Common myeloid progenitor, CD34-positive (primary cell): ENCODE measurements at regions of chr6 and their contacts with region 1.

Region 1: DNA sequence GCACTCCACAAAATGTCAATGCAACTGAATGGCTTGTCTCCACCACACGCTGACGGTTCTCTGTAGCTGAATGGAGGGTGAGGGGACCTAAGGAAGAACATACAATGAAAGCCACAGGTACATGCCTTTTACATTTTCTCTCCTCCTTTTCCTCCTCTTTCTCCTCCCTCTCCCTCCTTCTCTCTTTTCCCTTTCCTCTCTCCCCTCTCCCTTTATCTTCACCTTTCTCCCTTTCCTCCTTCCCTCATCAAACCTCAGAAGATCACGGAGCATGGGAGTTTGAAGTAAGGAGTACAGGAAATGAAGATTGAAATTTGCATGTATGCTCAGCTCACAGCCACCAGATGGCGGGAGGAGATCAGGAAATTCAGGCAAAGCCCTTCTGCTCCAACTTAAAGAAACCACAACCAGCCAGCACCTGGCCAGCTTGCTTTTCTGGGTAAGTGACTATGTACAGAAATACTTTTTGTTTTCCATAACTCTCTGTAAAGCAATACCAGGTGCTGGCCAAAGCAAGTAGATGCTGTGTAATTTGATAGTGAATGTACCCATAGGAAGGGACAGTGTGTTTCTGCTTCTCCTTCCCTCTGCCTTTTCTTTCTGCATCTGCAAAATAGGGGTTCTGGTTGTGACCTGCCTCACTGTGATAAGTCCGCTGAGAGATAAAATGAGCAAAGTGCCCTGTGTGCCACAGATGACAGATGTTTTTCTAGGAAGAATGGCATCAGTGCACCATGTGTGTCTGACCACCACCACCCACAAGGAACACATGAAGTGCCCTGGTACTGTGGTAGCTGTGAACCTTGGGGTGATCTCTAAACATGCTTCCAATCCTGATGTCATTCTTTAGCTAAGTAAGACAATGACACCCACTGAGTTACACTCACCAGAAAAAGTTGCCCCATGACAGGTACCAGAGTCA is 18.6 kb upstream of the FOXO3 start:
- DNase-seq: peak; percentile 85 to 93 (median 92)
- H3K4me3 ChIP-seq: peak overlapping the region in 5 of 7 experiments; percentile 30 to 71 (median 42)
- H3K27ac ChIP-seq: no peak overlapping the region
- H3K4me1 ChIP-seq: peaks cover 3 to 31% (median 23%) of the 10 kb centered on the region in 4 experiments
- H3K27me3 ChIP-seq: no peaks in the 10 kb centered on the region

Region 2: GRCh38 chr6:108497883-108498282 is 44.2 kb before region 1 on chr6:
- CTCF ChIA-PET with region 1: no interaction called
- POLR2A ChIA-PET with region 1: no interaction called
- DNase-seq: peak; percentile 41 to 70 (median 64)
- H3K4me3 ChIP-seq: no peak overlapping the region
- H3K27ac ChIP-seq: no peak overlapping the region
- H3K4me1 ChIP-seq: peaks cover 0 to 5% (median 0%) of the 10 kb centered on the region in 4 experiments
- H3K27me3 ChIP-seq: no peaks in the 10 kb centered on the region

Region 3: DNA sequence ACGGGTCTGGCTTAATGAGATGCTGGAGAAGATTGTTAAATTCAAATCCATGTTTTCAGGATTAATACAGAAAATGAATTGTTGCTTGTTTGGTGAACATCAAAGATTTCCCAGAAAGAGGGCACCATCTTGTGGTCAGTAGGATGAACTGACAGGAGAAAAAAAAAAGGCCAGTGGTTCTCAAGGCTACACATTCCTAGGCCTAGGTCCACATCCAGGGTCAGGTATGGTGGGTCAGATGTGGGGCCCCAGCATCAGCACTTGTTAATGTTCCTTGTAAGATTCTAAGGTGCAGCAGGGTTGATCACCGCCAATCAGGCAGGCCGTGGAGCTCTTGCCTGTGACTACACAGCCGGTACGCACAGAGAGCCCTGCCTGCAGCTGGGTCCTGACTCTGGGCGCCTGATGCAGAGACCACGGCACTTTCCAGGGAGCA is 15.3 kb before region 1 on chr6:
- CTCF ChIA-PET with region 1: interaction called, 13 read pairs
- POLR2A ChIA-PET with region 1: no interaction called
- DNase-seq: peak; percentile 42 to 65 (median 64)
- H3K4me3 ChIP-seq: no peak overlapping the region
- H3K27ac ChIP-seq: no peak overlapping the region
- H3K4me1 ChIP-seq: peaks cover 0 to 2% (median 0%) of the 10 kb centered on the region in 4 experiments
- H3K27me3 ChIP-seq: peaks cover 0 to 2% (median 0%) of the 10 kb centered on the region in 5 experiments

Region 4: DNA sequence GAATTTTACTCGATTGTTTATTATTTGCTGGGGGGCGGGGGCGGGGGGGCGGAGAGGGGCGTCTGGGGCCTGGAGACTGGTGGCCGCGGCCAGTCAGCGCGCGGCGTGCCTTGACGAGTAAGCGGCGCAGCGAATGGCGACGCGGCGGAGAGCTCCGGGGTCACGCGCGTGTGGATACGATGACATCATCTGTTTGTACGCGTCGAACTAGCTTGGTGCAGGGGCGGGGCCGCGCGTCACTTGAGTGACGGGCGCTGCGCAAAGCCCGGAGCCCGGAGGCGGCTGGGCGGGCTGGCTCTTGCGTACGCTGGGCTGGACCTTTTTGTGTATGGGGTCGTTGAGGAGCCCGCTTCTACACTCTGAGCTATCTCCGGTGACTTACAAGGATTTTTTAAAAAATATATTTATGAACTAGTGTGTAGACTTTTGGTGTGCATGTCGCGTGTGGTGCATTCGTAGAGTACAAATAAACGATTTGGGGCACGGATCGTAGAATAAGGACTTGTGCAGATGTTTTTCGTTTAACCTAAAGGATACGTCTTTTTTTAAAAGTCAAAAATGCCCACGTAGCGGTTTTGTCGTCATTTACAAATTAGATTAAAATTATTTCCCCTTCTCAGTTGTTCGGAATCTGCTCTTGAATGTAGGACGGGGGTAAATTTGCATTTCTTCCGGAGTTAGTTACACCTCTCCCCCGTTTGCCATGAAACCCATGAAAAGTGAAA is 16.4 kb after region 1 on chr6:
- CTCF ChIA-PET with region 1: interaction called, 71 read pairs
- POLR2A ChIA-PET with region 1: no interaction called
- DNase-seq: peak; percentile 99 to 100 (median 100)
- H3K4me3 ChIP-seq: peak overlapping the region; percentile 92 to 99 (median 96)
- H3K27ac ChIP-seq: peak overlapping the region; percentile 90 to 93
- H3K4me1 ChIP-seq: peaks cover 9 to 52% (median 38%) of the 10 kb centered on the region in 4 experiments
- H3K27me3 ChIP-seq: no peaks in the 10 kb centered on the region

Region 5: DNA sequence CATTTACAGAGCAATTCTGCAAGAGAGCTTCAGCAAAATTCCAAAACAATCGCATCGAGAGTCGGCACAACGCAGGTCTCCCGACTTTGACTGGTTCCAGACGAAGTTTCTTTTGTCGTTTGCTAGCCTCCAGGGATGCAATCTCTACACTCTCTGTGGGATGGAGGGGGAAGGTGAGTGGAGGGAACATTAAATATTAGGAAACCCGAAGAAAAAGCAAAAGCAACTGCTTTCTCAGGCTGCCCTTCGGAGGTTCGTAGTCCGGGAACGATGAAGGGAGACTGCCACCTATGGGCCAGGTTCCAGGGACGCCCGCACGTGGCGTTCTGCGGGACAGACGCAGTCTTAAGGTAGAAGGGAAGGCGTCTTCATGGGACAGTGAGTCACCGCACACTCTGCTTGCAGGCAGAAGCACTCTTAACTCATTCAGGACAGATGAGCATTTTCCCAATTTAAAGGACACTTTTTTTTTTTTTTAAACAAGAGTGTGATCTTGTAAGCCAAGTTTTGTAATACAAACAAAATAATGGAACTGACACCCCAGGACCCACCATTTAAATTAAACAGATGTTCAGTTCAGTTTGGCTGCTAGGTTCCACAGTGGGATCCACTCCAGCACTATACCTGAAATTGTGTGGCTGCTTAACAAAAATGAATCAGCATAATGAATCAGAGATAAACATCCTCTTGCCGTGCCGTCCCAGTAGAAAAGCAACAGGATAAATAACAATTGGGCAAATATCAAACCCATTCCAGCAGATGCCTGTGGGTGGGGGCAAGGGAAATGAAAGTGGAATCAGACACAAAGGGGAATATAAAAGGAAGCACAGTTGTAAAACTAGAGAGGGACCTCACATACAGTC is 240.3 kb after region 1 on chr6:
- CTCF ChIA-PET with region 1: interaction called, 20 read pairs
- POLR2A ChIA-PET with region 1: no interaction called
- DNase-seq: peak; percentile 85 to 91 (median 88)
- H3K4me3 ChIP-seq: peak overlapping the region in 6 of 7 experiments; percentile 54 to 92 (median 72)
- H3K27ac ChIP-seq: no peak overlapping the region
- H3K4me1 ChIP-seq: peaks cover 0 to 20% (median 6%) of the 10 kb centered on the region in 4 experiments
- H3K27me3 ChIP-seq: no peaks in the 10 kb centered on the region

Region 6: DNA sequence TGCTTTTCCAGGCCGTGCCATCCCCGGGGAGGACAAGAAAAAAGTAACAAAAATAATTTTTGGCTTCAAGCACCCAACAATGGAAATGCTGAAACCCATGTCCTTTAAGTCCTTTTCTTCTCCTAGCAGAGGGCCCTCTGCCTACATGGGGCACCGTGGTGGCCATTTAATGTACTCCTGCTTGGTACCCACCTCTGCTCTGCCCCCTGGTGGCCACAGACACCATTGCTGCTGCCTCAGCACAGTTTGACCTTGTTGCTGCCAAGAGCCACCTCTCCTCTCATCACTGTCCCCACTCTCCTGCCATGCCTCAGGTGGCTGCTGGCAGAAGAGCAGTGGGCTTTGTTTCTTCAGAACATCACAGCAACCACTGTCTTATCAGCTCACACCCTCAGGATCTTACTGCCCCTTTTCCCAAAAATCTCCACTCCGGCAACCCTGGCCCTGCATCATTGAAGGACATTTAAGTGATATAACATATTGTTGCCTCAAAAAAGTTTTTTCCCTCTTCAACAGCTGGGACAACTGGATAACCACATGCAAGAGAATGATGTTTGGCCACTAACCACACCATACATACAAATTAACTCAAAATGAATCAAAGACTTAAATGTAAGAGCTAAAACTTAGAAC is 293.2 kb after region 1 on chr6:
- CTCF ChIA-PET with region 1: interaction called, 60 read pairs
- POLR2A ChIA-PET with region 1: no interaction called
- DNase-seq: peak; percentile 88 to 94 (median 91)
- H3K4me3 ChIP-seq: no peak overlapping the region
- H3K27ac ChIP-seq: no peak overlapping the region
- H3K4me1 ChIP-seq: peaks cover 15 to 22% (median 19%) of the 10 kb centered on the region in 4 experiments
- H3K27me3 ChIP-seq: no peaks in the 10 kb centered on the region

Region 7: DNA sequence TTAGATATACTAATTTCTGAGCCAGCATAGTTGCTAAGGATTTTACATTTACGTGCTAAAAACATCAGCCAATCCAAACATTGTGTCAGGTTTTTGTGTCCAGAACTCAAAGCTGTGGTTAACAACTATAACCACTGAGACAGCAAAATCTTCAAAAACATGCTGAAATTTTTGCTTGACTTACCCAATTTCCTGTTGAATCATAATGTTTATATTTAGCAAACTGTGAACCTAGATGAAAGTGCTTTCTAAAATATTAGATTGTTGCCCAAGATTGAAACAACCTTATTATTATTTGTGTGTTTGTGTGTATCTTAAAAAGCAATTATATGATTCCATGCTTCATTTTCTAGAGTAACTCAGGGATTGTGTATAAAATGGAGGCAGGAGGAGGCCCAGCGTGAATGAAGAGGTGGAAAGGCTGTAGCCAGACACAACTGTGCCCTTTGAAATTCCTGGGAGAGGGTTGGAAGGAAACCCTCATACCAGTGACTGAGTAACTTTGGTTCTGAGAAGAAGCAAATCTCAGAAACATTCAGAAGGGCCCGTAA is 354.1 kb after region 1 on chr6:
- CTCF ChIA-PET with region 1: interaction called, 13 read pairs
- POLR2A ChIA-PET with region 1: interaction called, 3 read pairs
- DNase-seq: peak; percentile 40 to 90 (median 86)
- H3K4me3 ChIP-seq: peak overlapping the region in 1 of 7 experiments; percentile 30
- H3K27ac ChIP-seq: peak overlapping the region; percentile 59 to 75
- H3K4me1 ChIP-seq: peaks cover 6 to 53% (median 29%) of the 10 kb centered on the region in 4 experiments
- H3K27me3 ChIP-seq: no peaks in the 10 kb centered on the region